Aorta (tissue), 5 donors: ENCODE measurements at regions of chr1 and their contacts with region 1.

Region 1: GRCh38 chr1:156583821-156584622 is 4.5 kb downstream of the TTC24 start:
- DNase-seq: peak in 1 of 2 donors; percentile 76
- ATAC-seq: peak; percentile 74
- H3K4me3 ChIP-seq: no peak overlapping the region
- H3K27ac ChIP-seq: no peak overlapping the region
- H3K4me1 ChIP-seq: no peaks in the 10 kb centered on the region
- H3K27me3 ChIP-seq: no peaks in the 10 kb centered on the region

Region 2: DNA sequence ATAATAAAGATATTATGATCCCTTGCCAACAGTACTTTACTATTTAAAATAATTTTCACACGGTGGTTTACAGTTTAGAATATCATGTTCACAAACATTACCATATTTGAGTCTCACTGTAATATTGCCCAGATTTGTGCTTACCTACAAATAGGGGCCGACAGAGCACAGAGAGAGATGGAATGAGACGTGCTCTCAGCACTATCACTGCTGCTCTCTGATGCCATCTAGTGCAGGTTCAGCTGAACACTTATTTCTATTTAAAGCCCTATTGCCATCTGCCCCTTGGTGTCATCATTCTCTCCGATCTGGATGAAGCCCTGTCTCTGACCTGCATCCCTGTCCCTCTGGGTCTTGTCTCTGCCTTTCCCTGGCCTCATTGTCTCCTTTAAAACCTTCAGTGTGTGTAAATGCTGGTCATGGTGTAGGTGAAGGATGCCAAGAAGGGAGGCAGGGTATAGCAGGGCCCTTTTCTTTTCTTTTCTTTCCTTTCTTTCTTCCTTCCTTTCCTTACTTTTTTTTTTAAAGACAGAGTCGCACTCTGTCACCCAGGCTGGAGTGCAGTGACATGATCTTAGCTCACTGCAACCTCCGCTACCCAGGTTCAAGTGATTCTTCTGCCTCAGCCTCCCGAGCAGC is 24.1 kb after region 1 on chr1:
- intact Hi-C with region 1: loop called in 1 of 2 experiments (anchors 2 kb)
- DNase-seq: peak in 1 of 2 donors; percentile 40
- ATAC-seq: peak; percentile 87
- H3K4me3 ChIP-seq: no peak overlapping the region
- H3K27ac ChIP-seq: no peak overlapping the region
- H3K4me1 ChIP-seq: no peaks in the 10 kb centered on the region
- H3K27me3 ChIP-seq: no peaks in the 10 kb centered on the region

Region 3: DNA sequence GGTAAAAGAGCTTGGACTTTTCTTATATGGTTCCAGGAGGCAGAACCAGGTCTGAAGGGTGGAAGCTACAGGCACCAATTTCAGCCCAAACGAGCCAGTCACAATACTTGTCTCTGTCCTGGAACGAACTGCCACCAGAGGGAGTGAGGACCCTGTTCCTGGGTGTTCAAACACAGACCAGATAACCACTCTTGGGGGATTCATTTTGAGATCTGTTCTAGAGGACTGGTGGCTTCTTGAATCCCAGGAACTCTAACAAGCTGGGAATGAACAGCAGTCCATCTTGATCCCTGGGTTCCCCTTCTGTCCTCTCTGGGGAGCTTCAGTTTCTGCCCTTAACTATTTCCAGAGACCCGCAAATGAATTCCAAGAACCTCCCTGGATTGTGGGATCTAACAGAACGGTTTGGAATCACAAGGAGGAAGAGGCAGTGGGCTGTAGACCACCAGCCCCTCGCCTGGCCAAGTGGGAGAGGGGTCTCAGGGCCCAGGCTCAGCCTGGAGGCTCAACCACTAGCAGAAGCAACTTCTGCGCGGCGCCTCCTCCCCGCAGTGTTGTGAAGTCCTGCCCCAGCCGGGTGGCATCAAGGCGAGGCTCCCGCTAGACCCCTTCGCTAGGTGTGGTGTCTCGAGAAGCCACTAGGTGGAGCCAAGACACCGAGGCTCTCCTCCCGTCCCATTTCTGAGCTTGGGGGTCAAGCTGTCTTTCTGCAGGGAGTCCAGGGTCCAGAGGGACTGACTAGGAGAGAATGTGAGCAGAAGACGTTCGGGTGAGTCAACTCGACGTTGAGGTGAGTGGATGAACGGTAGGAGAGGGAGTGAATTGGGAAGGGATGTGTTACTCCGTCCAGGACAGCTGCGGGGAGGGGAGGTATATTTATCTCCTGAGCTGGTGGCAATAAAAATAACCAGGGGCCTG is 105.3 kb after region 1 on chr1:
- intact Hi-C with region 1: no loop called
- DNase-seq: peak; percentile 86 to 91
- ATAC-seq: peak; percentile 93
- H3K4me3 ChIP-seq: no peak overlapping the region
- H3K27ac ChIP-seq: no peak overlapping the region
- H3K4me1 ChIP-seq: no peaks in the 10 kb centered on the region
- H3K27me3 ChIP-seq: no peaks in the 10 kb centered on the region